CD14-positive monocyte (primary cell): ENCODE measurements at regions of chr2 and their contacts with region 1.

Region 1: GRCh38 chr2:174577967-174578589 is 19.5 kb downstream of the WIPF1 start:
- DNase-seq: peak; percentile 49 to 71 (median 69)
- H3K4me3 ChIP-seq: no peak overlapping the region
- H3K4me3 Mint-ChIP-seq: no peak overlapping the region
- H3K27ac ChIP-seq: no peak overlapping the region
- H3K27ac Mint-ChIP-seq: peak overlapping the region in 3 of 7 donors; percentile 37 to 80 (median 54)
- H3K4me1 ChIP-seq: peaks cover 17 to 25% of the 10 kb centered on the region in 2 donors
- H3K4me1 Mint-ChIP-seq: peaks cover 27% of the 10 kb centered on the region
- H3K27me3 ChIP-seq: no peaks in the 10 kb centered on the region
- H3K27me3 Mint-ChIP-seq: no peaks in the 10 kb centered on the region
- CTCF ChIP-seq: peak; percentile 83

Region 2: DNA sequence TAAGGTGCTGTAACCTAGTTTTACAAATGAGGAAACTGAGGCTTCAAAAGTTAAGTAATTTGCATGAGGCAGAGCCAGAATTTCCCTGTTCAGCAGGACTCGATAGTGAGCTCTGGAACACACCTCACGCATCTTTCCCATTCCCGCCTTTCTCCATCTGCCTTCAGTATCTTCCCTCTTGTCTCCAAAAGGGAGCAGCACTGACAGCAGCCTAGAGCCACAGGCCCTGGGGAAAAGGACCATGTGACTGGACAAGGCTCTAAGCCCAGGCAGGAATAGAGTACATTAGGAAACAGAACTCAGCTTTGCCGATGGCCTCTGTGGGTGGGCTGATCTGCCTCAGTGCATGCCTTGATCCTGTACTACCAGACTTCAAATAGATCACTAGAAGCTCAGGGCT is 112.8 kb before region 1 on chr2:
- intact Hi-C with region 1: no loop called
- DNase-seq: no peak
- H3K4me3 ChIP-seq: no peak overlapping the region
- H3K4me3 Mint-ChIP-seq: no peak overlapping the region
- H3K27ac ChIP-seq: no peak overlapping the region
- H3K27ac Mint-ChIP-seq: no peak overlapping the region
- H3K4me1 ChIP-seq: no peaks in the 10 kb centered on the region
- H3K4me1 Mint-ChIP-seq: peaks cover 2% of the 10 kb centered on the region
- H3K27me3 ChIP-seq: no peaks in the 10 kb centered on the region
- H3K27me3 Mint-ChIP-seq: peaks cover 0 to 2% (median 0%) of the 10 kb centered on the region in 3 donors
- CTCF ChIP-seq: no peak

Region 3: GRCh38 chr2:174606336-174606735 is 28.3 kb after region 1 on chr2:
- intact Hi-C with region 1: loop called in 1 of 2 experiments (anchors 5 kb)
- DNase-seq: no peak
- H3K4me3 ChIP-seq: no peak overlapping the region
- H3K4me3 Mint-ChIP-seq: no peak overlapping the region
- H3K27ac ChIP-seq: peak overlapping the region in 1 of 2 donors; percentile 67
- H3K27ac Mint-ChIP-seq: peak overlapping the region in 6 of 7 donors; percentile 39 to 92 (median 76)
- H3K4me1 ChIP-seq: peaks cover 13 to 16% of the 10 kb centered on the region in 2 donors
- H3K4me1 Mint-ChIP-seq: peaks cover 43% of the 10 kb centered on the region
- H3K27me3 ChIP-seq: no peaks in the 10 kb centered on the region
- H3K27me3 Mint-ChIP-seq: peaks cover 0 to 1% (median 0%) of the 10 kb centered on the region in 3 donors
- CTCF ChIP-seq: no peak

Region 4: GRCh38 chr2:174615871-174616436 is 37.9 kb after region 1 on chr2:
- intact Hi-C with region 1: loop called in 1 of 2 experiments (anchors 5 kb)
- DNase-seq: no peak
- H3K4me3 ChIP-seq: no peak overlapping the region
- H3K4me3 Mint-ChIP-seq: no peak overlapping the region
- H3K27ac ChIP-seq: peak overlapping the region; percentile 40 to 77
- H3K27ac Mint-ChIP-seq: peak overlapping the region in 6 of 7 donors; percentile 13 to 86 (median 68)
- H3K4me1 ChIP-seq: peaks cover 20 to 39% of the 10 kb centered on the region in 2 donors
- H3K4me1 Mint-ChIP-seq: peaks cover 60% of the 10 kb centered on the region
- H3K27me3 ChIP-seq: no peaks in the 10 kb centered on the region
- H3K27me3 Mint-ChIP-seq: no peaks in the 10 kb centered on the region
- CTCF ChIP-seq: no peak

Region 5: DNA sequence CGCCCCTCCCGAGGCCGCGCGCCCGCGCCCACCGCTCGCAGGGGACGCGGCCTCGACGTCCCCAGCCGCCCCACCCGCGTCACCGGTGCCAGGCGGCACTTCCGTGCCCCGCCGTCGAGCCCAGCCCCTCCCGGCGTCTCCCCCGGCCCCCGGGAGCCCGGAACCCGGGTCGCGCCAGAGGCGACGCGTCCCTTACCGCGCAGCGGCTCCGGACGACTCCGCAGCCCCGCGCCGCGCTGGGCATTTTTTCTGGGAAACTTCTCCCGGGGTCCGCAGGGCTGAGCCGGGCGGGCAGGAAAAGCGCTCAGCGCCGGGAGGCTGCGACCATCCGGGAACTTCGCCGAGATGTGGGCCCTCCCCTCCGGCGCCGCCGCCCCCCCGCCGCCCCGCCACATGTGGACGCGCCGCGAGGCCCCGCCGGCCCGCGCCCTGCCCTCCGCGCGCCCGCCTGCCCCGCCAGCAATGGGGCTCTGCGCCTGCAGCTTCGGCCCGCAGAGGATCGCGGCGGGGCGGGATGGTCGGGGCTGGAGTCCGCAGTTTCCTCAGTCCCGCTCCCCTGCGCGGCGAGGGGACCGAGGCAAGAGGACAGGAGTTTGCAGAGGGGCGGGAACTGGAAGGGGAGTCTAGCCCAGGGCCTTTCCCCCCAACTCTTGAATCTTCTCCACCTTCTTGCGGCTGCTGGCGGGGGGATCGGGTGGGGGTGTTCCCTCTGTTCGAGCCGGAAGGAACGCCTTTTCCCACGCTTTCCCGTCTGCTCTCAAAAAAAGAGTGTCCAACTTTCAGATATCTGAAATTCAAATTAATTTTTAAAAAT is 104.7 kb after region 1 on chr2:
- intact Hi-C with region 1: loop called (anchors 5 kb)
- DNase-seq: peak in 1 of 3 donors; percentile 11
- H3K4me3 ChIP-seq: peak overlapping the region; percentile 50 to 88 (median 74)
- H3K4me3 Mint-ChIP-seq: peak overlapping the region; percentile 91 to 94
- H3K27ac ChIP-seq: peak overlapping the region in 1 of 2 donors; percentile 46
- H3K27ac Mint-ChIP-seq: peak overlapping the region in 4 of 7 donors; percentile 61 to 73 (median 67)
- H3K4me1 ChIP-seq: peaks cover 20 to 35% of the 10 kb centered on the region in 2 donors
- H3K4me1 Mint-ChIP-seq: peaks cover 40% of the 10 kb centered on the region
- H3K27me3 ChIP-seq: no peaks in the 10 kb centered on the region
- H3K27me3 Mint-ChIP-seq: peaks cover 10 to 17% (median 14%) of the 10 kb centered on the region in 3 donors
- CTCF ChIP-seq: no peak

Region 6: GRCh38 chr2:174688079-174688478 is 110.0 kb after region 1 on chr2:
- intact Hi-C with region 1: loop called (anchors 5 kb)
- DNase-seq: peak in 2 of 3 donors; percentile 25 to 51
- H3K4me3 ChIP-seq: no peak overlapping the region
- H3K4me3 Mint-ChIP-seq: no peak overlapping the region
- H3K27ac ChIP-seq: no peak overlapping the region
- H3K27ac Mint-ChIP-seq: peak overlapping the region in 1 of 7 donors; percentile 15
- H3K4me1 ChIP-seq: peaks cover 10 to 28% of the 10 kb centered on the region in 2 donors
- H3K4me1 Mint-ChIP-seq: peaks cover 36% of the 10 kb centered on the region
- H3K27me3 ChIP-seq: no peaks in the 10 kb centered on the region
- H3K27me3 Mint-ChIP-seq: peaks cover 11 to 16% (median 14%) of the 10 kb centered on the region in 3 donors
- CTCF ChIP-seq: peak; percentile 74